ENCODE measurements at regions of chr6 and their contacts with region 1.

Region 1: GRCh38 chr6:132768051-132768517 is 10.4 kb upstream of the VNN2 start:
- DNase-seq: peak; percentile 69
- ATAC-seq: peak; percentile 72
- H3K4me3 ChIP-seq: peak overlapping the region; percentile 46; the same call in 1 of the 2 replicates
- H3K27ac ChIP-seq: no peak overlapping the region
- H3K4me1 ChIP-seq: peaks cover 14% of the 10 kb centered on the region
- H3K27me3 ChIP-seq: no peaks in the 10 kb centered on the region
- CTCF ChIP-seq: peak; percentile 89

Region 2: DNA sequence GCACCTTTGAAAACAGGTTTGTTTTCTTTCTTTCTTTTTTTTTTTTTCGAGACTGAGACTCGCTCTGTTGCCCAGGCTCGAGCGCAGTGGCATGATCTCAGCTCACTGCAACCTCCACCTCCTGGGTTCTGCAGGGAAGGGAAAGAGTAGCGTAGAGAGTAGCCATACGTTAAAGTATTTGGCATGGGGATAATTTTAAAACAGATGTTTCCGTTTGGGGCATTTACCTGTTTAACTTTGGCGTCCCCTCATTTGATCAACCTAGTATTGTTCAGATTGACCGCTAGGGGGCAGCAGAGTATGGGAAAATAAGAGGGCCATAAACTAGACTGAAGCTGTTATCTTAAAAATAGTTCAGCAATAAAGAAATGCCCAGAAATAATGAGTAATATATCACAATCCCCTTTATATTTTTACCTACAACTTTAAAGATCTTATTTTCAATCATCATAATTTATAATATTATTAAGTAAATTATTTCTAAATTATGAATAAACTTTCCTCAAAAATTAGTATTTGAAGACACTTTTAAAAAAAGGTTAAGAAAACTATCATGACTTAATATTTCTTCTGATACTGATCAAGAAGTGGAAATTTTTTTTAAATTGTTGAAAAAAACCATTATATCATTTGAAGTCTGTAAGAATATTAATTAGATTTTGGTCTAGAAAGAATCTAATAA is 237.7 kb before region 1 on chr6:
- CTCF ChIA-PET with region 1: interaction called, 3 read pairs
- POLR2A ChIA-PET with region 1: no interaction called
- intact Hi-C with region 1: loop called (anchors 1 kb)
- DNase-seq: peak; percentile 70
- ATAC-seq: peak; percentile 75
- H3K4me3 ChIP-seq: peak overlapping the region; percentile 66
- H3K27ac ChIP-seq: no peak overlapping the region
- H3K4me1 ChIP-seq: peaks cover 26% of the 10 kb centered on the region
- H3K27me3 ChIP-seq: no peaks in the 10 kb centered on the region
- CTCF ChIP-seq: peak; percentile 69

Region 3: DNA sequence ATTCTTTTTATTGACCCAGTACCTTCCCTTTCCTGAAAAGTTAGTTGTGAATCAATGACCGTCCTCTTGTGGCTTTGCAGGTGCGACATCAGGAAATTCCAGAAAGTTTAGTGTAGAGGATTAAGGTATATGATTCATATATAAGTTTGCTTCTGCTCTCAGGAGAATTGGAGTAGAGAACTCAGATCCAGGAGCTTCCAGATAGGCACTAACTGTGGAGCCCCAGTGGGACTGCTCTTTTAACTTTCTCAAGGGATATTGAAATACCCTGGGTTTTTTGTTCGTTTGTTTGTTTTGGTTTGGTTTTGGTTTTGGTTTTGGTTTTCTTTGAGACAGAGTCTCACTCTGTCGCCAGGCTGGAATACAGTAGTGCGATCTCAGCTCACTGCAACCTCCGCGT is 153.5 kb before region 1 on chr6:
- CTCF ChIA-PET with region 1: no interaction called
- POLR2A ChIA-PET with region 1: no interaction called
- intact Hi-C with region 1: loop called (anchors 5 kb)
- DNase-seq: peak; percentile 87
- ATAC-seq: peak; percentile 77
- H3K4me3 ChIP-seq: peak overlapping the region; percentile 58
- H3K27ac ChIP-seq: peak overlapping the region; percentile 88
- H3K4me1 ChIP-seq: peaks cover 57% of the 10 kb centered on the region
- H3K27me3 ChIP-seq: no peaks in the 10 kb centered on the region
- CTCF ChIP-seq: no peak

Region 4: GRCh38 chr6:132669690-132670291 is 98.3 kb before region 1 on chr6:
- CTCF ChIA-PET with region 1: no interaction called
- POLR2A ChIA-PET with region 1: no interaction called
- intact Hi-C with region 1: loop called (anchors 1 kb)
- DNase-seq: peak; percentile 64
- ATAC-seq: peak; percentile 64
- H3K4me3 ChIP-seq: peak overlapping the region; percentile 44; the same call in 1 of the 2 replicates
- H3K27ac ChIP-seq: no peak overlapping the region
- H3K4me1 ChIP-seq: peaks cover 4% of the 10 kb centered on the region; the same call in 1 of the 2 replicates
- H3K27me3 ChIP-seq: no peaks in the 10 kb centered on the region
- CTCF ChIP-seq: peak; percentile 72

Region 5: GRCh38 chr6:132715204-132715603 is 52.9 kb before region 1 on chr6:
- CTCF ChIA-PET with region 1: interaction called, 9 read pairs
- POLR2A ChIA-PET with region 1: no interaction called
- intact Hi-C with region 1: loop called (anchors 1 kb)
- DNase-seq: peak; percentile 72
- ATAC-seq: peak; percentile 84
- H3K4me3 ChIP-seq: no peak overlapping the region
- H3K27ac ChIP-seq: no peak overlapping the region
- H3K4me1 ChIP-seq: 0 out of 2 replicates have a peak, but pooled peaks cover 8% of the 10 kb centered on the region
- H3K27me3 ChIP-seq: no peaks in the 10 kb centered on the region
- CTCF ChIP-seq: peak; percentile 66

Region 6: DNA sequence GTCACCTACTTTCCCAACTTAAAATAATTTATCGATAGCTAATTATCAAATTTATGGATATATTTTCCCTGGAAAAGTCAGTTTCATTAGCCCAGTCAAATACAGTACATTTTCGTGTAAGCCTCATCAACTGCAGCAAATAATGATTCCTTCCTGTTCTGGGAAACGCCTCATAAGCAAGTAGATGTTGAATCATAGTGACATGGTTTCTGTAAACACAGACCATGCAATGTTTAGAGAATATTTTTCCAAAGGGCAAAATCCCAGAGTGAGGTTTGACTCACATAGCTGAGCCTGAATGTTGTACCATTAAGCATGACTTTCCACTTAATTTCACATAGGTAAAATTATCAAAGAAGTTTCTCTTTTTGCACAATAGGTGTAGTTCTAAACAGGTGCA is 37.5 kb before region 1 on chr6:
- CTCF ChIA-PET with region 1: no interaction called
- POLR2A ChIA-PET with region 1: no interaction called
- intact Hi-C with region 1: loop called (anchors 1 kb)
- DNase-seq: peak; percentile 86
- ATAC-seq: peak; percentile 95
- H3K4me3 ChIP-seq: no peak overlapping the region
- H3K27ac ChIP-seq: peak overlapping the region; percentile 80
- H3K4me1 ChIP-seq: peaks cover 20% of the 10 kb centered on the region
- H3K27me3 ChIP-seq: no peaks in the 10 kb centered on the region
- CTCF ChIP-seq: no peak

Region 7: DNA sequence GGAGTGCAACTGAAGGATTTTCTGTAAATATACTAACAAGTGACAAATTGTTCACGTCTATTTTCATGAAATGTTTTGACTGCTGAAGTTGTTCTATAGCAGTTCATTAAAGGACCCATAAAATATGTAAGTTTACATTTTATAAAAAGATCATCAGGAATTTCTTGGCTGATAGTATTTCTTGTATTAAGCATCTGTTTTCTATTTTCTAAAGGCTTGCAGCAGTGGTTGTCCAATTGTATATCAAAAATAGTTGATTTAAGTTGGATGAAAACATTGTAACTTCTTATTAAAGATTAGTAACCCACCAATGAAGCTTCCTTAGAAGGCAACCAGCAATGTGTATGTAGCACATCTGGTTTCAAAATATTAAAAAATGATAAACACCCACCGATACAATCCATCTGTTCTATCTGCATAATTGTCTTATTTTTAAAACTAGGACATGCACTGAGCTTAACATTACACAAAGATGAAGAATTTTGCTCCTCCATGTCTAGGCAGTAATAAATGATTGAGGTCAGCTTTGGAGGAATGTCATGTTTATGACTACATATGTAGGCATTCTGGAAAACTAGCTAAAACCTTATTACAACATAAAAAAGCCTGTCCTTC is 819.6 kb after region 1 on chr6:
- CTCF ChIA-PET with region 1: no interaction called
- POLR2A ChIA-PET with region 1: no interaction called
- intact Hi-C with region 1: no loop called
- DNase-seq: no peak
- ATAC-seq: no peak
- H3K4me3 ChIP-seq: no peak overlapping the region
- H3K27ac ChIP-seq: no peak overlapping the region
- H3K4me1 ChIP-seq: peaks cover 10% of the 10 kb centered on the region
- H3K27me3 ChIP-seq: no peaks in the 10 kb centered on the region
- CTCF ChIP-seq: no peak